ENCODE measurements at regions of chr4 and their contacts with region 1.

Region 1: DNA sequence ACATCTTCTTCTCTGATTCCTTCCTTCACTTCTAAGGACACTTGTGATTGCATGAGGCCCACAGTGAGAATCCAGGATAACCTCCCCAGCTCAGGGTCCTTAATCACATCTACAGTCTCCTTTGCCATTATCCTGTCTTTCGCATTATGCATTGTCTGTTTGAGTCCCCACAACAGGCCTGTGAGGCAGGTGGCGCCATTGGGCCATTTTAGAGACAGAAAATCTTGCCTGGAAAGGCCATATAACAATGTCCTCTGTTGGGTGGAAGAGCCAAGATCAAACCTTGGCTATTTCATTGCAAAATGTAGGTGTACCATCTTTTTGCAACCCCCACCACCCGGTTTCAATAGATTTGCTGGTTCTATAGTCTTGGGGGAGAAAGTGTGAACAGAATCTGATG is 11.8 kb upstream of the DCUN1D4 start:
- DNase-seq: peak; percentile 80
- ATAC-seq: peak; percentile 82
- H3K4me3 Mint-ChIP-seq: no peak overlapping the region
- H3K27ac Mint-ChIP-seq: no peak overlapping the region
- H3K4me1 Mint-ChIP-seq: peaks cover 1% of the 10 kb centered on the region
- H3K27me3 Mint-ChIP-seq: peaks cover 10% of the 10 kb centered on the region
- CTCF ChIP-seq: peak; percentile 63

Region 2: GRCh38 chr4:51842554-51843308 is 11.6 kb after region 1 on chr4 and contains the start of gene DCUN1D4:
- CTCF ChIA-PET with region 1: interaction called, 12 read pairs
- POLR2A ChIA-PET with region 1: interaction called, 3 read pairs
- intact Hi-C with region 1: no loop called
- DNase-seq: peak; percentile 99
- ATAC-seq: peak; percentile 90
- H3K4me3 Mint-ChIP-seq: peak within 1 kb of the TSS; percentile 88
- H3K27ac Mint-ChIP-seq: peak within 1 kb of the TSS; percentile 91
- H3K4me1 Mint-ChIP-seq: peaks cover 20% of the 10 kb centered on the region
- H3K27me3 Mint-ChIP-seq: no peaks in the 10 kb centered on the region
- CTCF ChIP-seq: no peak
- total RNA-seq, gene DCUN1D4: 32.6 to 39.8 TPM

Region 3: GRCh38 chr4:52028969-52029368 is 197.8 kb after region 1 on chr4:
- CTCF ChIA-PET with region 1: interaction called, 3 read pairs
- POLR2A ChIA-PET with region 1: no interaction called
- intact Hi-C with region 1: loop called (anchors 1 kb)
- DNase-seq: no peak
- ATAC-seq: no peak
- H3K4me3 Mint-ChIP-seq: no peak overlapping the region
- H3K27ac Mint-ChIP-seq: no peak overlapping the region
- H3K4me1 Mint-ChIP-seq: peaks cover 4% of the 10 kb centered on the region
- H3K27me3 Mint-ChIP-seq: no peaks in the 10 kb centered on the region
- CTCF ChIP-seq: no peak